HepG2 (cell line): ENCODE measurements at regions of chr14 and their contacts with region 1.

Region 1: GRCh38 chr14:28661171-28661772 is 105.3 kb upstream of the FOXG1 start:
- DNase-seq: peak; percentile 16
- ATAC-seq: no peak
- H3K4me3 ChIP-seq: no peak overlapping the region
- H3K27ac ChIP-seq: no peak overlapping the region
- H3K4me1 ChIP-seq: no peaks in the 10 kb centered on the region
- H3K27me3 ChIP-seq: no peaks in the 10 kb centered on the region
- CTCF ChIP-seq: no peak
- EP300 ChIP-seq: no peak
- POLR2A ChIP-seq: no peak
- RAD21 ChIP-seq: no peak

Region 2: GRCh38 chr14:28690029-28690692 is 28.9 kb after region 1 on chr14:
- CTCF ChIA-PET with region 1: no interaction called
- POLR2A ChIA-PET with region 1: no interaction called
- in situ Hi-C with region 1: no loop called
- intact Hi-C with region 1: loop called (anchors 1 kb)
- DNase-seq: no peak
- ATAC-seq: no peak
- H3K4me3 ChIP-seq: no peak overlapping the region
- H3K27ac ChIP-seq: no peak overlapping the region
- H3K4me1 ChIP-seq: no peaks in the 10 kb centered on the region
- H3K27me3 ChIP-seq: no peaks in the 10 kb centered on the region
- CTCF ChIP-seq: no peak
- EP300 ChIP-seq: no peak
- POLR2A ChIP-seq: no peak
- RAD21 ChIP-seq: no peak